CD4-positive, alpha-beta T cell (primary cell): ENCODE measurements at regions of chr4 and their contacts with region 1.

Region 1: DNA sequence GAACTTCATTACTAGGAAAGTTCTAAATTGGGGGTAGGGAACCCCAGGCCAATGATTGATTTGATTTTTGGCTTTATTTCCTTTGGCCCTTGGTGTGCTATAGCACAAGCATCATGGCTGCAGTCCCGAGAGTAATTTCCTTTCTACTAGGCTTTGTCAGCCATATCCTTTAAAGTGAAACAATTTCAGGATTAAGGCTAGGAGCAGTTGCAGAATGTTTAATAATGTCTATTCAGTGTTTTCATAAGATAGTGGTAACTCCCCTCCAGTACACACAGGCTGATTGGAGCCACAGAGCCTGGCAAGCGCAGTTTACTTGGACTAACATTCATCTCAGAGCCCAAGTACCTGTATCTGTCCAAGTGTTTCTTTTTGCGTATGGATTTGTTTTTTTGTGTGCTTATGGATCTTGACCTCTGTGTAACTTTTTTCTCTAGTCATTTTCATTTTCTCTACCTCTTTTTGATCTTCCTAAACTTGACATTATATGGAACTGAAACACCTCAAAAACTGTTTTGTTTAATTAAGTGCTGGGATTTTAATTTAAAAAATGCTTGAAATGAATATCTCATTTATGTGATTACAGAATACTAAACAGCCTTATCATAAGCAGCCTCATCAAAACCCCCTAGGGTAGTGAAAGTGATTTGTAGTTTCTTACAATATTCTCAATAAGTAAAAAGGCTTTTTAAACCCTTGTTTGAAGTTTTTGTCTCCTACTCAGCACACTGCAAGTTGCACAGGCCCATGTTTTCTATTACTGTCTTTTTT is 7.5 kb downstream of the STIM2 start:
- DNase-seq: no peak
- ATAC-seq: no peak
- H3K4me3 ChIP-seq: no peak overlapping the region
- H3K4me3 Mint-ChIP-seq: peak overlapping the region; percentile 54
- H3K27ac ChIP-seq: no peak overlapping the region
- H3K27ac Mint-ChIP-seq: peak overlapping the region; percentile 19
- H3K4me1 ChIP-seq: peaks cover 28% of the 10 kb centered on the region
- H3K4me1 Mint-ChIP-seq: peaks cover 84% of the 10 kb centered on the region
- H3K27me3 ChIP-seq: no peaks in the 10 kb centered on the region
- H3K27me3 Mint-ChIP-seq: no peaks in the 10 kb centered on the region
- CTCF ChIP-seq: no peak

Region 2: GRCh38 chr4:26346203-26346620 is 521.9 kb before region 1 on chr4:
- CTCF ChIA-PET with region 1: no interaction called
- POLR2A ChIA-PET with region 1: no interaction called
- intact Hi-C with region 1: no loop called
- DNase-seq: peak in 3 of 14 experiments; percentile 44 to 68 (median 51)
- ATAC-seq: no peak
- H3K4me3 ChIP-seq: no peak overlapping the region
- H3K4me3 Mint-ChIP-seq: no peak overlapping the region
- H3K27ac ChIP-seq: no peak overlapping the region
- H3K27ac Mint-ChIP-seq: no peak overlapping the region
- H3K4me1 ChIP-seq: peaks cover 7% of the 10 kb centered on the region
- H3K4me1 Mint-ChIP-seq: peaks cover 69% of the 10 kb centered on the region
- H3K27me3 ChIP-seq: no peaks in the 10 kb centered on the region
- H3K27me3 Mint-ChIP-seq: no peaks in the 10 kb centered on the region
- CTCF ChIP-seq: no peak

Region 3: GRCh38 chr4:26916195-26916594 is 48.1 kb after region 1 on chr4:
- CTCF ChIA-PET with region 1: no interaction called
- POLR2A ChIA-PET with region 1: no interaction called
- intact Hi-C with region 1: loop called (anchors 5 to 10 kb)
- DNase-seq: peak in 1 of 14 experiments; percentile 21
- ATAC-seq: peak; percentile 34
- H3K4me3 ChIP-seq: no peak overlapping the region
- H3K4me3 Mint-ChIP-seq: no peak overlapping the region
- H3K27ac ChIP-seq: no peak overlapping the region
- H3K27ac Mint-ChIP-seq: peak overlapping the region; percentile 60
- H3K4me1 ChIP-seq: peaks cover 4% of the 10 kb centered on the region
- H3K4me1 Mint-ChIP-seq: peaks cover 83% of the 10 kb centered on the region
- H3K27me3 ChIP-seq: no peaks in the 10 kb centered on the region
- H3K27me3 Mint-ChIP-seq: no peaks in the 10 kb centered on the region
- CTCF ChIP-seq: no peak

Region 4: GRCh38 chr4:26985873-26986272 is 117.8 kb after region 1 on chr4:
- CTCF ChIA-PET with region 1: no interaction called
- POLR2A ChIA-PET with region 1: no interaction called
- intact Hi-C with region 1: loop called in 1 of 2 experiments (anchors 5 kb)
- DNase-seq: peak in 6 of 14 experiments; percentile 15 to 79 (median 58)
- ATAC-seq: peak; percentile 98
- H3K4me3 ChIP-seq: no peak overlapping the region
- H3K4me3 Mint-ChIP-seq: peak overlapping the region; percentile 26
- H3K27ac ChIP-seq: no peak overlapping the region
- H3K27ac Mint-ChIP-seq: peak overlapping the region; percentile 12
- H3K4me1 ChIP-seq: peaks cover 10% of the 10 kb centered on the region
- H3K4me1 Mint-ChIP-seq: peaks cover 73% of the 10 kb centered on the region
- H3K27me3 ChIP-seq: no peaks in the 10 kb centered on the region
- H3K27me3 Mint-ChIP-seq: no peaks in the 10 kb centered on the region
- CTCF ChIP-seq: no peak

Region 5: DNA sequence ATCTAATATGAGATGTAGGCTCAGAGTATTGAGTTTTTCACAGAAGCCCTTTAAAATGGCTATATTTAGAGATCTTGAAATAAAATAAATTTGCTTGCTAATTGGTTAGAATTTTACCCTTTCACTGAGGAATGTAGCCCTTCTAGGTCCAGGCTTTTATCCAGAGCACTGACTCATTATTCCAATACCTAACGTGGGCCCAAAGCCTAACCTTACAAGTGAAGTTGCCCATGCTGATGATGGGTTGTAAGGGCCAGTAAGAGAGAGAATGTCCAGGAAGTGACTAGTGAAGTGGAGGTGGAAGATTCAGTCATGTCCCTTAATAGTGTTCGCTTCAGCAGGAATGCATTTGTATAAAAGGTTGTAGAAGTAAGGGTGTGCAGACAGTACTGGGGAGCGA is 148.5 kb after region 1 on chr4:
- CTCF ChIA-PET with region 1: no interaction called
- POLR2A ChIA-PET with region 1: no interaction called
- intact Hi-C with region 1: no loop called
- DNase-seq: no peak
- ATAC-seq: no peak
- H3K4me3 ChIP-seq: no peak overlapping the region
- H3K4me3 Mint-ChIP-seq: no peak overlapping the region
- H3K27ac ChIP-seq: no peak overlapping the region
- H3K27ac Mint-ChIP-seq: no peak overlapping the region
- H3K4me1 ChIP-seq: peaks cover 4% of the 10 kb centered on the region
- H3K4me1 Mint-ChIP-seq: peaks cover 13% of the 10 kb centered on the region
- H3K27me3 ChIP-seq: no peaks in the 10 kb centered on the region
- H3K27me3 Mint-ChIP-seq: no peaks in the 10 kb centered on the region
- CTCF ChIP-seq: no peak

Region 6: DNA sequence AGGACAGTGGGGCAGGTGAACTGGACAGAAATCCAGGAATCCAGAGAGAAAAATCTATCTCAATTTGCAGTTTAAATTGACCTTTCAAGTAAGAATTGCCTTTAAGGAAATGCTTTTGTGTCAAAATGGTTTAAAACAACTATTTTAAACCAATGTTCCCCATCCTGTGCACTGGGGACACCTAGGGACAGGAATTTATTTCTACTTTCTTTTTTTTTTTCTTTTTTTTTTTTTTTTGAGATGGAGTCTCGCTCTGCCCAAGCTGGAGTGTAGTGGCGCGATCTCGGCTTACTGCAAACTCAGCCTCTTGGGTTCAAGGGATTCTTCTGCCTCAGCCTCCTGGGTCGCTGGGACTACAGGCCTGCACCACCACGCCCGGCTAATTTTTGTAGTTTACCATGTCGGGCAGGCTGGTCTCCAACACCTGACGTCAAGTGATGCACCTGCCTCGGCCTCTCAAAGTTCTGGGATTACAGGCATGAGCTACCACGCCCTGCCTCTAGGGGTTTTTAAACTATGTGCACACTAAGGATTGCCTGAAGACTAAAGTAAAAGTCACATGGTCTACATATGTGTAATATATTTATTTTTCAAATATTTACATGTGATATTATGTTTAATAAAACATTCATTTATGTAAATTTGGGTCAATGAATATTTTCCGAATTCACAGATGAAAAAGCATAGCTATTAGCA is 1205.9 kb after region 1 on chr4:
- CTCF ChIA-PET with region 1: no interaction called
- POLR2A ChIA-PET with region 1: no interaction called
- intact Hi-C with region 1: no loop called
- DNase-seq: no peak
- ATAC-seq: no peak
- H3K4me3 ChIP-seq: no peak overlapping the region
- H3K4me3 Mint-ChIP-seq: no peak overlapping the region
- H3K27ac ChIP-seq: no peak overlapping the region
- H3K27ac Mint-ChIP-seq: no peak overlapping the region
- H3K4me1 ChIP-seq: no peaks in the 10 kb centered on the region
- H3K4me1 Mint-ChIP-seq: no peaks in the 10 kb centered on the region
- H3K27me3 ChIP-seq: no peaks in the 10 kb centered on the region
- H3K27me3 Mint-ChIP-seq: no peaks in the 10 kb centered on the region
- CTCF ChIP-seq: no peak